ENCODE measurements at regions of chr17 and their contacts with region 1.

Region 1: GRCh38 chr17:51764387-51764972 is 394.0 kb downstream of the CA10 start:
- DNase-seq: peak; percentile 47 to 65 (median 56)
- ATAC-seq: peak; percentile 85
- H3K4me3 ChIP-seq: no peak overlapping the region
- H3K27ac ChIP-seq: no peak overlapping the region
- H3K4me1 ChIP-seq: no peaks in the 10 kb centered on the region
- H3K27me3 ChIP-seq: no peaks in the 10 kb centered on the region
- CTCF ChIP-seq: peak; percentile 56 to 89 (median 80)
- POLR2A ChIP-seq: no peak

Region 2: DNA sequence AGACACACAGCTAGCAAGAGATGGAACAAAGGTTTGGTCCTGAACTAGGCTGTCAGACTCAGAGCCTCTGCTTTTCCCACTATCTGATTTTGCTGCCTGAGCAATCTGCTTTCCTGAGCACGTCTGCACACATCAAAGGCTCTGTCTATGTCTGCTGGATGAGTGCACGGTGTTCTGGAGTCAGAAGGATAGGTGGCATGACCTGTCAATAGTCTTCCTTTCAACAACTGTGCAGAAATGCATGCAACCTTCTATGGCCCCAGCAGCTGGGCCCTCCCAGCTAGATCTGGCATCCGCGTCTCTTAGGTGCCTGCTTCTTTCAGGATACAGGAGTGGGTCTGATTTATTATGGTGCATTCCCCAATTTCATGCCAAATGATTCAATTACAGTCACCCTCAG is 365.8 kb before region 1 on chr17:
- intact Hi-C with region 1: no loop called
- DNase-seq: no peak
- ATAC-seq: no peak
- H3K4me3 ChIP-seq: no peak overlapping the region
- H3K27ac ChIP-seq: no peak overlapping the region
- H3K4me1 ChIP-seq: no peaks in the 10 kb centered on the region
- H3K27me3 ChIP-seq: no peaks in the 10 kb centered on the region
- CTCF ChIP-seq: no peak
- POLR2A ChIP-seq: no peak

Region 3: GRCh38 chr17:51820252-51820651 is 55.8 kb after region 1 on chr17:
- intact Hi-C with region 1: loop called (anchors 10 kb)
- DNase-seq: no peak
- ATAC-seq: no peak
- H3K4me3 ChIP-seq: no peak overlapping the region
- H3K27ac ChIP-seq: no peak overlapping the region
- H3K4me1 ChIP-seq: peaks cover 3% of the 10 kb centered on the region
- H3K27me3 ChIP-seq: no peaks in the 10 kb centered on the region
- CTCF ChIP-seq: no peak
- POLR2A ChIP-seq: no peak

Region 4: GRCh38 chr17:52106638-52107261 is 342.3 kb after region 1 on chr17:
- intact Hi-C with region 1: loop called (anchors 5 kb)
- DNase-seq: peak; percentile 46 to 73 (median 52)
- ATAC-seq: no peak
- H3K4me3 ChIP-seq: no peak overlapping the region
- H3K27ac ChIP-seq: no peak overlapping the region
- H3K4me1 ChIP-seq: no peaks in the 10 kb centered on the region
- H3K27me3 ChIP-seq: no peaks in the 10 kb centered on the region
- CTCF ChIP-seq: peak; percentile 38 to 81 (median 73)
- POLR2A ChIP-seq: no peak

Measured in body of pancreas (tissue), 4 donors.